ENCODE measurements at regions of chr17 and their contacts with region 1.

Region 1: DNA sequence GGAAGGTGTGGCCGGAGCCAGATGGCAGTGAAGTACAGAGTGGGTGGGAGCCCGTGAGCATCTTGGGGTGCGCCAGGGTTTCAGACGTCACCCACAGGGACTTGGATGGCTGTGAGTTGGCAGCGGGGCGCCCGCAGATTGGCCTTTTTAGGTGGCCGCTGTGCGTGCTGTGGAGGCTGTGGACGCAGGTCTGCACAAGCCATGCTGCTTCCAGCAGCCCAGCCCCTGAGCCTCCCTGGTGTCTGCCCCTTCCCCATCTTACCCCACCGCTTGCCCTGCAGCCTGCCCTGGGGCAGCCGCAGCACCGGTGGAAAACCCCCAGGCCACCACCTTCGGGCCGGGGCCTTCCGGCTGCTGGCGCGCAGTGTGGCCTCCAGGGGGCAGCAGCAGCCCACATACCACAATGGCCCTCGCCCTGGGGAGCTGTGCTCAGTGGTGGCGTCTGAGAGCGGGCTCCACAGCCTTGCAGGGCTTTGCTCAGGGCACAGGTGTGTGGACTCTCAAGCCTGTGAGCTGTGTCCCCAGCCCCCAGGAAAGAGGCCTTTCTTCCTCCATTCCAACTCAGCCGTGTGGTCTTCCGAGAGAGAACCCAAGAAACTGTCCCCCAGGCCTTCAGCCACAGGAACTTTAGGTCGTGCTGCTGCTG is 11.8 kb downstream of the ENDOV start:
- DNase-seq: peak; percentile 97
- CTCF ChIP-seq: peak; percentile 97

Region 2: GRCh38 chr17:80978499-80979497 is 552.0 kb after region 1 on chr17:
- in situ Hi-C with region 1: loop called (anchors 5 kb)
- DNase-seq: no peak
- CTCF ChIP-seq: no peak